B cell (primary cell): ENCODE measurements at regions of chr12 and their contacts with region 1.

Region 1: GRCh38 chr12:89949457-89950195 is 241.0 kb upstream of the ATP2B1 start:
- DNase-seq: peak; percentile 90
- ATAC-seq: peak; percentile 65
- H3K4me3 ChIP-seq: peak overlapping the region in 3 of 5 experiments; percentile 9 to 47 (median 12)
- H3K4me3 Mint-ChIP-seq: peak overlapping the region; percentile 68
- H3K27ac ChIP-seq: peak overlapping the region; percentile 81 to 98
- H3K27ac Mint-ChIP-seq: peak overlapping the region; percentile 81
- H3K4me1 ChIP-seq: peaks cover 44 to 47% of the 10 kb centered on the region in 2 donors
- H3K4me1 Mint-ChIP-seq: peaks cover 60% of the 10 kb centered on the region
- H3K27me3 ChIP-seq: no peaks in the 10 kb centered on the region
- H3K27me3 Mint-ChIP-seq: no peaks in the 10 kb centered on the region
- CTCF ChIP-seq: peak; percentile 70

Region 2: GRCh38 chr12:89862511-89863179 is 87.0 kb before region 1 on chr12:
- CTCF ChIA-PET with region 1: no interaction called
- POLR2A ChIA-PET with region 1: interaction called, 3 read pairs
- intact Hi-C with region 1: loop called (anchors 1 kb)
- DNase-seq: peak; percentile 88
- ATAC-seq: peak; percentile 68
- H3K4me3 ChIP-seq: peak overlapping the region; percentile 23 to 65 (median 44)
- H3K4me3 Mint-ChIP-seq: peak overlapping the region; percentile 86
- H3K27ac ChIP-seq: peak overlapping the region; percentile 92 to 96
- H3K27ac Mint-ChIP-seq: peak overlapping the region; percentile 98
- H3K4me1 ChIP-seq: peaks cover 58 to 65% of the 10 kb centered on the region in 2 donors
- H3K4me1 Mint-ChIP-seq: peaks cover 68% of the 10 kb centered on the region
- H3K27me3 ChIP-seq: no peaks in the 10 kb centered on the region
- H3K27me3 Mint-ChIP-seq: no peaks in the 10 kb centered on the region
- CTCF ChIP-seq: no peak

Region 3: GRCh38 chr12:89907659-89908058 is 42.0 kb before region 1 on chr12:
- CTCF ChIA-PET with region 1: no interaction called
- POLR2A ChIA-PET with region 1: no interaction called
- intact Hi-C with region 1: no loop called
- DNase-seq: no peak
- ATAC-seq: no peak
- H3K4me3 ChIP-seq: no peak overlapping the region
- H3K4me3 Mint-ChIP-seq: no peak overlapping the region
- H3K27ac ChIP-seq: no peak overlapping the region
- H3K27ac Mint-ChIP-seq: no peak overlapping the region
- H3K4me1 ChIP-seq: no peaks in the 10 kb centered on the region
- H3K4me1 Mint-ChIP-seq: no peaks in the 10 kb centered on the region
- H3K27me3 ChIP-seq: no peaks in the 10 kb centered on the region
- H3K27me3 Mint-ChIP-seq: no peaks in the 10 kb centered on the region
- CTCF ChIP-seq: no peak

Region 4: GRCh38 chr12:89927226-89927698 is 22.4 kb before region 1 on chr12:
- CTCF ChIA-PET with region 1: interaction called, 24 read pairs
- POLR2A ChIA-PET with region 1: interaction called, 37 read pairs
- intact Hi-C with region 1: loop called (anchors 1 kb)
- DNase-seq: peak; percentile 89
- ATAC-seq: peak; percentile 88
- H3K4me3 ChIP-seq: peak overlapping the region; percentile 46 to 83 (median 60)
- H3K4me3 Mint-ChIP-seq: peak overlapping the region; percentile 95
- H3K27ac ChIP-seq: peak overlapping the region; percentile 96 to 97
- H3K27ac Mint-ChIP-seq: peak overlapping the region; percentile 99
- H3K4me1 ChIP-seq: peaks cover 24 to 32% of the 10 kb centered on the region in 2 donors
- H3K4me1 Mint-ChIP-seq: peaks cover 52% of the 10 kb centered on the region
- H3K27me3 ChIP-seq: no peaks in the 10 kb centered on the region
- H3K27me3 Mint-ChIP-seq: no peaks in the 10 kb centered on the region
- CTCF ChIP-seq: no peak

Region 5: DNA sequence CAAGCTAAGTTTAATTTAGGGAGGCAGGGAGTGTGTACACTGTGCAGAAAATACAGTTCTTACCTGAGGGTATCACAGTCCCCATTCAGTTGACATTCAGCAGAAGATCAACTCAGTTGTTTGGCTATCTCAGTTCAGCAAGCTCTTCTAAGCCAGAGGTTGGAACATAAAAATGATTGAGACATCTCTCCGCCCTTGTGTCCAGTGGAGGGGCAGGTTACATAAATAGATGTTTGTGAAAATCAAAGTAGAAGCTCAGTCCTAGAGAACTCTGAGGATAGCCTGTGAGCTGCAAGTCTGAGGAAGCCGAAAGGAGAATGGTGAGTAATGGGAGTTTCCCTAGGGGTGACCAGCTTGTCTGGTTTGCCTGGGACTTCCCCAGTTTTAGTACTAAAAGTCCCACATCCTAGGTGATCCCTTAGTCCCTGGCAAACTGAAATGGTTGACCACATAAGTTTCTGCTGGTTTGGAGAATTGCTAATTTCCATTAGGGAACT is 10.4 kb after region 1 on chr12:
- CTCF ChIA-PET with region 1: interaction called, 12 read pairs
- POLR2A ChIA-PET with region 1: interaction called, 3 read pairs
- intact Hi-C with region 1: loop called (anchors 1 kb)
- DNase-seq: peak; percentile 66
- ATAC-seq: peak; percentile 86
- H3K4me3 ChIP-seq: no peak overlapping the region
- H3K4me3 Mint-ChIP-seq: peak overlapping the region; percentile 69
- H3K27ac ChIP-seq: no peak overlapping the region
- H3K27ac Mint-ChIP-seq: peak overlapping the region; percentile 77
- H3K4me1 ChIP-seq: peaks cover 16 to 18% of the 10 kb centered on the region in 2 donors
- H3K4me1 Mint-ChIP-seq: peaks cover 34% of the 10 kb centered on the region
- H3K27me3 ChIP-seq: no peaks in the 10 kb centered on the region
- H3K27me3 Mint-ChIP-seq: no peaks in the 10 kb centered on the region
- CTCF ChIP-seq: no peak

Region 6: DNA sequence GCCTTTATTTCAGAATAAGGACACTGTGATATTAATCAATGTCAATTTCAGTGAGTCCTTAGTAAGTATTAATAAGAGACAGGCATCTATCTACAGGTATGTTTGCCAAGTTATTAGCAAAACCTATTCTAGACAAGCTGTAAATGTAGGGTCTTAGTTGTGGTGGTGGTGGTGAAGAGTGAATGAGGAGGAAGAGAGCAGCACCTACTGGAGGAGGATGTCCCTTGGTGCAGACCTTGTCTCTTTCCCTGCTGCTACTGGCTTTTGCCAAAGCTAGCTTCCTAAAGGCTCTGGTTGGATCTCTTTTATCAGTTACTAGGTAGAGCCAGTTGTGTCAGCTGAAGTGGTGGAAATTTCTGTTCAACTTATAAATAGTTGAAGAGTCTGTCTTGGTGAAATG is 63.8 kb after region 1 on chr12:
- CTCF ChIA-PET with region 1: interaction called, 10 read pairs
- POLR2A ChIA-PET with region 1: no interaction called
- intact Hi-C with region 1: loop called (anchors 2 kb)
- DNase-seq: peak; percentile 64
- ATAC-seq: peak; percentile 95
- H3K4me3 ChIP-seq: no peak overlapping the region
- H3K4me3 Mint-ChIP-seq: no peak overlapping the region
- H3K27ac ChIP-seq: no peak overlapping the region
- H3K27ac Mint-ChIP-seq: peak overlapping the region; percentile 33
- H3K4me1 ChIP-seq: no peaks in the 10 kb centered on the region
- H3K4me1 Mint-ChIP-seq: peaks cover 14% of the 10 kb centered on the region
- H3K27me3 ChIP-seq: no peaks in the 10 kb centered on the region
- H3K27me3 Mint-ChIP-seq: no peaks in the 10 kb centered on the region
- CTCF ChIP-seq: peak; percentile 60

Region 7: GRCh38 chr12:90245391-90245790 is 295.8 kb after region 1 on chr12:
- CTCF ChIA-PET with region 1: no interaction called
- POLR2A ChIA-PET with region 1: no interaction called
- intact Hi-C with region 1: no loop called
- DNase-seq: no peak
- ATAC-seq: no peak
- H3K4me3 ChIP-seq: no peak overlapping the region
- H3K4me3 Mint-ChIP-seq: no peak overlapping the region
- H3K27ac ChIP-seq: no peak overlapping the region
- H3K27ac Mint-ChIP-seq: no peak overlapping the region
- H3K4me1 ChIP-seq: no peaks in the 10 kb centered on the region
- H3K4me1 Mint-ChIP-seq: peaks cover 9% of the 10 kb centered on the region
- H3K27me3 ChIP-seq: no peaks in the 10 kb centered on the region
- H3K27me3 Mint-ChIP-seq: peaks cover 5% of the 10 kb centered on the region
- CTCF ChIP-seq: no peak